ENCODE measurements at regions of chr5 and their contacts with region 1.

Region 1: DNA sequence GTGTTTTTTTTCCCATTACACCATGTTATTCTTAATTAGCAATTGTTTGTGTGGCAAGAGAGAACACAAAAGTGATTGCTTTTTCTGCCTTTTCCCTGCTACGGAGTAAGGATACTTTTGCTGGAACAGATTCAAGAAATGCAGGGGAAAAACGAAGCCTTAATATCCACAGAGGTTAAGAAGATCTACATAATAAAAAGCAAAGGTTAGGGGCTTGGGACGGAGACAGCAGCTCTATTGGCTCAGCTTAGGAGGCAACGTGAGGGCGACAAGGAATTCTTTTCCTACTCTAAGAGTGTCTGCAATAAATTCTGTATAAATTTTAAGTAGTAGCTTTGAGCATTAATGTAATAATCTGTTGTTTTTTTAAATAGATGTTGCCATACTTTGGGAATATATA is 693.3 kb downstream of the DTWD2 start:
- DNase-seq: no peak
- H3K4me3 ChIP-seq: no peak overlapping the region
- H3K27ac ChIP-seq: no peak overlapping the region
- H3K4me1 ChIP-seq: no peaks in the 10 kb centered on the region
- H3K27me3 ChIP-seq: no peaks in the 10 kb centered on the region
- CTCF ChIP-seq: no peak
- POLR2A ChIP-seq: no peak

Region 2: GRCh38 chr5:117738571-117738970 is 556.5 kb before region 1 on chr5:
- intact Hi-C with region 1: loop called (anchors 5 kb)
- DNase-seq: no peak
- H3K4me3 ChIP-seq: no peak overlapping the region
- H3K27ac ChIP-seq: no peak overlapping the region
- H3K4me1 ChIP-seq: no peaks in the 10 kb centered on the region
- H3K27me3 ChIP-seq: no peaks in the 10 kb centered on the region
- CTCF ChIP-seq: no peak
- POLR2A ChIP-seq: no peak

Region 3: DNA sequence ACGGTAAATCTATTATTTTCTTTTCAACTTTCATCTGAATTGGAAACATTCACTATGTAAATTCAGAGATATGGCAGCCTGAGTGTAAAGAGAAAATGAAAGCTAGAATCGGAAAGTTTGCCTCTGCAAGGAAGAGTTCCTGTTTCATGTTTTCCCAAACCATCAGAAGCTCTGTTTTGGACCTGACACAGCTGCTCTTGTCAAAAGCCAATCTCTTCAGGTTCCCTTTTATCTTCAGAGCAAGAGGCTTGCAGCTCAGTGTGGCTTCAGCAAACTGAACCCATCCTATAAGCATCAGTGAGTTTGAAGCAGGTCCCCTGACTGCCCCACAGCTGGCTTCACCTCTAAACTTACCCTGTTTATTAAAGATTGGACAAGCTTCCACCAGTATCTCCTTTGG is 406.4 kb before region 1 on chr5:
- intact Hi-C with region 1: no loop called
- DNase-seq: no peak
- H3K4me3 ChIP-seq: peak overlapping the region; percentile 14 to 18 (median 16)
- H3K27ac ChIP-seq: no peak overlapping the region
- H3K4me1 ChIP-seq: no peaks in the 10 kb centered on the region
- H3K27me3 ChIP-seq: no peaks in the 10 kb centered on the region
- CTCF ChIP-seq: no peak
- POLR2A ChIP-seq: no peak

Region 4: DNA sequence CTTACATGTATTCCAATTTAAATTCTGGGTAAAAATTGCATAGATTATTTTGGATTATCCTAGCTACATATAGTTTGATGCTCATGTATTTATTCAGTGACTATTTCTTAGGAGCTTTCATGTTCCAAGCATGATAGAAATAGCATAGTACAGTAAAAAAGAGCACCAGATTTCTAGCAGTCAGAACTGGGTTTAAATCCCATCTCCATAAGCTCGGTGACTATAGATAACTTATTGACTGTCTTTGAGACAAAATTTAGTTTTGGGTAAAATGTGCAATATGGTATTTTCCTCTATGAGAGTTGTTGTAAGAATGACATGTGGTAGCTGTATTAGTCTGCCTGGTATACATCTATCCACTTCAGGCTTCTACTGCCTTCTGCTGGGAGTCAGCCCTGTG is 196.3 kb before region 1 on chr5:
- intact Hi-C with region 1: no loop called
- DNase-seq: no peak
- H3K4me3 ChIP-seq: no peak overlapping the region
- H3K27ac ChIP-seq: no peak overlapping the region
- H3K4me1 ChIP-seq: no peaks in the 10 kb centered on the region
- H3K27me3 ChIP-seq: no peaks in the 10 kb centered on the region
- CTCF ChIP-seq: no peak
- POLR2A ChIP-seq: no peak

Region 5: GRCh38 chr5:118247571-118247994 is 47.5 kb before region 1 on chr5:
- intact Hi-C with region 1: no loop called
- DNase-seq: no peak
- H3K4me3 ChIP-seq: no peak overlapping the region
- H3K27ac ChIP-seq: no peak overlapping the region
- H3K4me1 ChIP-seq: no peaks in the 10 kb centered on the region
- H3K27me3 ChIP-seq: no peaks in the 10 kb centered on the region
- CTCF ChIP-seq: no peak
- POLR2A ChIP-seq: no peak

Region 6: DNA sequence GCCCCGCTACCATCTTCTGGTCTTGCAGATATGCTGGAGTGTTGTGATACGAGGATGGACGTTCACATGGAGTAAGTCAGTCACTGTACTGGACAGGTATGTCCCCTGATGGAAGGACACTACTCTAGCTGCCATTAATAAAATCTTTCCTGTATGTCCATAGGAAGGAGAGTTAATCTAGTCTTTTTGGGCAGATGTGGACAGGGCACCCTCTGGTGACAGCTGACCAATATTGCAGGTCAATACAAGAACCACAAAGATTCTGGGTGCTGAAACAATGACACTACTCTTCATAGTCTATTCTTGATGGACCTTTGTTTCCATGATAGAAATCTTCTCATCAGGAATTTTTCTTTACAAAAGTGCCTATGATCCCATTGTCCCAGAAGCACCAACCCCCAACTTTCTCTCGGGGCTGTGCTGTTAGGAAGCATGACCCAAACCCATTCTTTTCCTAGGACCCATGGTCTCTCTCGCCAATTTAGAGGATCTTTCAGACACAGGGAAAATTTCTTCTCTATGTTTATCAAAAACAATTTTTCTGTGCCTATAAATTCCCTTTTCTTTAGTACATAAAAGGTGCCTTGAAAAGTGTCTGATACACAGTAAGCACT is 316.4 kb after region 1 on chr5:
- intact Hi-C with region 1: loop called (anchors 5 kb)
- DNase-seq: no peak
- H3K4me3 ChIP-seq: no peak overlapping the region
- H3K27ac ChIP-seq: no peak overlapping the region
- H3K4me1 ChIP-seq: no peaks in the 10 kb centered on the region
- H3K27me3 ChIP-seq: no peaks in the 10 kb centered on the region
- CTCF ChIP-seq: peak in 1 of 3 donors; percentile 21
- POLR2A ChIP-seq: no peak

Region 7: GRCh38 chr5:119501671-119502182 is 1206.7 kb after region 1 on chr5:
- intact Hi-C with region 1: no loop called
- DNase-seq: no peak
- H3K4me3 ChIP-seq: no peak overlapping the region
- H3K27ac ChIP-seq: no peak overlapping the region
- H3K4me1 ChIP-seq: no peaks in the 10 kb centered on the region
- H3K27me3 ChIP-seq: no peaks in the 10 kb centered on the region
- CTCF ChIP-seq: no peak
- POLR2A ChIP-seq: no peak